Endothelial cell of umbilical vein (primary cell): ENCODE measurements at regions of chr10 and their contacts with region 1.

Region 1: GRCh38 chr10:103712570-103713498 is 142.5 kb downstream of the SH3PXD2A start:
- DNase-seq: peak; percentile 71
- H3K4me3 ChIP-seq: no peak overlapping the region
- H3K27ac ChIP-seq: no peak overlapping the region
- H3K4me1 ChIP-seq: peaks cover 2% of the 10 kb centered on the region
- H3K27me3 ChIP-seq: no peaks in the 10 kb centered on the region
- CTCF ChIP-seq: peak; percentile 78 to 88
- POLR2A ChIP-seq: no peak

Region 2: GRCh38 chr10:102729029-102730026 is 983.5 kb before region 1 on chr10:
- CTCF ChIA-PET with region 1: no interaction called
- POLR2A ChIA-PET with region 1: no interaction called
- dilution Hi-C with region 1: no loop called
- intact Hi-C with region 1: no loop called
- DNase-seq: peak; percentile 78
- H3K4me3 ChIP-seq: no peak overlapping the region
- H3K27ac ChIP-seq: no peak overlapping the region
- H3K4me1 ChIP-seq: no peaks in the 10 kb centered on the region
- H3K27me3 ChIP-seq: no peaks in the 10 kb centered on the region
- CTCF ChIP-seq: peak; percentile 90 to 92
- POLR2A ChIP-seq: no peak

Region 3: DNA sequence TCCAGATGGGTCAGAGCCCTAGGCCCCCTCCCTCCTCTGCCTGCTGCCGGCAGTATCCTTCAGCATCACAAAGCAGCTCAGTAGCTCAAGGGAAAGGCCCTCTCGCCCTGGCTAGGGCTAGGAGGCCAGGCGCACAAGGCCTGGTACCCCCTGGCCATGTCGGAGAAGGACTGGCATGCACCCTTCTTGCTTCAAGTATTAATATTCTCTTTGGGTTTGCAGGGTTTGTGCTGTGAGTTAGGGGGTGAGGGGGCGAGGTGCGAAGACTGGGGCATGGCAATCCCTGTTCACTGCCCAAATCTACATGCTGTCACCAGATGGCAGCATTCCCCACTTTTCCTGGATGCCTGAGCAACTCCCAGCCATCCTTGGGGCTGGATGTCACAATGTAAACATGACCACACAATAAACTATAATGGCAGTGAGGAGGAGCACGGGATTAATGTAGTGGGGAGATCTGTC is 114.1 kb before region 1 on chr10:
- CTCF ChIA-PET with region 1: interaction called, 11 read pairs
- POLR2A ChIA-PET with region 1: no interaction called
- dilution Hi-C with region 1: no loop called
- intact Hi-C with region 1: no loop called
- DNase-seq: peak; percentile 70
- H3K4me3 ChIP-seq: no peak overlapping the region
- H3K27ac ChIP-seq: no peak overlapping the region
- H3K4me1 ChIP-seq: peaks cover 17% of the 10 kb centered on the region
- H3K27me3 ChIP-seq: no peaks in the 10 kb centered on the region
- CTCF ChIP-seq: peak; percentile 78
- POLR2A ChIP-seq: no peak

Region 4: GRCh38 chr10:103736763-103737162 is 23.9 kb after region 1 on chr10:
- CTCF ChIA-PET with region 1: interaction called, 16 read pairs
- POLR2A ChIA-PET with region 1: no interaction called
- dilution Hi-C with region 1: no loop called
- intact Hi-C with region 1: no loop called
- DNase-seq: peak; percentile 30
- H3K4me3 ChIP-seq: no peak overlapping the region
- H3K27ac ChIP-seq: no peak overlapping the region
- H3K4me1 ChIP-seq: peaks cover 18% of the 10 kb centered on the region
- H3K27me3 ChIP-seq: no peaks in the 10 kb centered on the region
- CTCF ChIP-seq: no peak
- POLR2A ChIP-seq: no peak

Region 5: DNA sequence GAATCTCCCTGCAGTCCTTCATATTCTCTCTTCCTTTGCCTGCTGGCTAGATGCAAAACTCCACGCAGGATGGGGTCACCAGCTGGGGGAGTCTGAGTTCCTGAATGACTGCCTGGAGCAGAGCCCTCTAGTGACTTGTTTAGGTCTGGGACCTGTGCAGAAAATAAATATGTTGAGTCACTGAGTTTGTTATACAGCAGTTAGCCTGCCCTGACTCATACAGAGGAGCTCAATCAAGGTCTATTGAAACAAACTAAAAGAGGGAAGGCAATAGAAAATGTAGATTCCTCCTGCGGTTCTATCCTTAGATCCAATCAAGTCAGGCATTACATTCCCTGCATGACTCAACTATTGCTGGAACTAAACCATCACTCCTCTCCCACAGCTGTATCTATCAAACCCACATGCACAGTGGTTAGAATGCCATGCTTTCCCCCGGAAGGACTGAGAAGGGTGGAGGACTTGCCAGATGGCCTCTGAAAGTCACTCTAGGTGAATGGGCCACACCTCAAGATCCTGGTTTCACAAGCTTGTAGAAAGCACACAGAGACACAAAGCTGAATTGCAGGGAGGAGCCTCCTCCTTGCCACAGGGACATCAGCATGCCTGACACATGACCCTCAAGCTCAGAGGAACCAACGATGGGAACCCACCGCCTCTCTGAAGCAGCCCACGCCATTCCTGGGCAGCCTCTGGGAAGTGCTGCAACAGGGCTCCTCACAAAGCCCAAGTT is 68.7 kb after region 1 on chr10:
- CTCF ChIA-PET with region 1: interaction called, 13 read pairs
- POLR2A ChIA-PET with region 1: no interaction called
- dilution Hi-C with region 1: no loop called
- intact Hi-C with region 1: no loop called
- DNase-seq: peak; percentile 22
- H3K4me3 ChIP-seq: no peak overlapping the region
- H3K27ac ChIP-seq: no peak overlapping the region
- H3K4me1 ChIP-seq: no peaks in the 10 kb centered on the region
- H3K27me3 ChIP-seq: no peaks in the 10 kb centered on the region
- CTCF ChIP-seq: peak; percentile 12 to 21
- POLR2A ChIP-seq: no peak

Region 6: DNA sequence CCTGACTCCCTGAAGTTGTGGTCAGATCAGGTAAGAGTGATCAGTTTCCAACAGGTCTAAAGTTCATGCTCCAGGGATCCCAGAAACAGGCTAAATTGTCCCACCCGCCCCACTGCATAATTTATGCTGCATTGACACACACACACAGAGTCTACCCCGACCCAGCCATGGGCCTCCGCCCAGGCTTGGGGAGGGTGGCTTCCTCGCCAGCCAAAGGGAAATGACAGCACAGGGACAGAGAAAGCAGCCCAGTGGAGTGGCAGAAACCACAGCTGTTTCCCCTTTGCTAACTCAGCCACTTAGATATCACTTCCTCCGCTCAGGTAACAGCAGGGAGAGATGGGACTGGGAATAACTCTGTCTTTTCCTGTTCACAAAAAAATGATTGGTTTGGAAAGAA is 133.1 kb after region 1 on chr10:
- CTCF ChIA-PET with region 1: interaction called, 13 read pairs
- POLR2A ChIA-PET with region 1: no interaction called
- dilution Hi-C with region 1: loop called (anchors 25 kb)
- intact Hi-C with region 1: no loop called
- DNase-seq: peak; percentile 34
- H3K4me3 ChIP-seq: no peak overlapping the region
- H3K27ac ChIP-seq: peak overlapping the region; percentile 23
- H3K4me1 ChIP-seq: peaks cover 28% of the 10 kb centered on the region
- H3K27me3 ChIP-seq: no peaks in the 10 kb centered on the region
- CTCF ChIP-seq: no peak
- POLR2A ChIP-seq: no peak

Region 7: GRCh38 chr10:103868200-103868599 is 155.4 kb after region 1 on chr10:
- CTCF ChIA-PET with region 1: interaction called, 43 read pairs
- POLR2A ChIA-PET with region 1: no interaction called
- dilution Hi-C with region 1: loop called (anchors 25 kb)
- intact Hi-C with region 1: no loop called
- DNase-seq: no peak
- H3K4me3 ChIP-seq: no peak overlapping the region
- H3K27ac ChIP-seq: no peak overlapping the region
- H3K4me1 ChIP-seq: no peaks in the 10 kb centered on the region
- H3K27me3 ChIP-seq: peaks cover 0 to 4% of the 10 kb centered on the region in 2 experiments
- CTCF ChIP-seq: no peak
- POLR2A ChIP-seq: no peak

Region 8: GRCh38 chr10:103881416-103882284 is 168.8 kb after region 1 on chr10:
- CTCF ChIA-PET with region 1: interaction called, 114 read pairs
- POLR2A ChIA-PET with region 1: no interaction called
- dilution Hi-C with region 1: no loop called
- intact Hi-C with region 1: loop called (anchors 1 kb)
- DNase-seq: no peak
- H3K4me3 ChIP-seq: no peak overlapping the region
- H3K27ac ChIP-seq: no peak overlapping the region
- H3K4me1 ChIP-seq: no peaks in the 10 kb centered on the region
- H3K27me3 ChIP-seq: no peaks in the 10 kb centered on the region
- CTCF ChIP-seq: no peak
- POLR2A ChIP-seq: no peak